ENCODE measurements at regions of chr11 and their contacts with region 1.

Region 1: DNA sequence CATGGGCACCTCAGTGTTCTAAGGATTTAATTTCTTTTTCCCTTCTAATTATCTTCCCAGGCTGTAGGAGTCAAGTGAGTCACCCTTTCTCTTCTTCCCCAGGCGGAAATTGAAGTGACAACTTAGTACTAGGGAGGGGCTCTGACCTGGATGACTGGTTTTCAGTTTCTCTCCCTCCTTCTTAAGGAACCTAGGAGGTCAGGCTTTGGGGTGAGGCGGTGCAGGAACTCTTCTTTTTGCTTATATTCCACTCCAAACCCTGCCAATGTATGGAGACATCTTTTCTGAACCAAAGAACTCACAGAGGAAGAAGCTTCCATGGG is 12.6 kb downstream of the ZDHHC5 start:
- DNase-seq: no peak
- ATAC-seq: no peak
- H3K4me3 ChIP-seq: no peak overlapping the region
- H3K27ac ChIP-seq: no peak overlapping the region
- H3K4me1 ChIP-seq: no peaks in the 10 kb centered on the region
- H3K27me3 ChIP-seq: no peaks in the 10 kb centered on the region
- CTCF ChIP-seq: no peak

Region 2: DNA sequence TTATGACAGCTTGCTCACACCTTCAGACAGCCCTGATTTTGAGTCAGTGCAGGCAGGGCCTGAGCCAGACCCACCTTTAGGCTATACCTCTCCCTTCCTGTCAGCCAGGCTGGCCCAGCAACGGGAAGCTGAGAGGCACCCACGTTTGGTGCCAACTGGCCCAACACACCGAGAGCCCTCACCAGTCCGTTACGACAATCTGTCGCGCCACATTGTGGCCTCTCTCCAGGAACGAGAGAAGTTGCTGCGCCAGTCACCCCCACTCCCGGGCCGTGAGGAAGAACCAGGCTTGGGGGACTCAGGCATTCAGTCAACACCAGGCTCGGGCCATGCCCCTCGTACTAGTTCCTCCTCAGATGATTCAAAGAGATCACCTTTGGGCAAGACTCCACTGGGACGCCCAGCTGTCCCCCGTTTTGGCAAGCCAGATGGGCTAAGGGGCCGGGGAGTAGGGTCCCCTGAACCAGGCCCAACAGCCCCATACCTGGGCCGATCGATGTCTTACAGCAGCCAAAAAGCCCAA is 18.4 kb after region 1 on chr11:
- CTCF ChIA-PET with region 1: no interaction called
- POLR2A ChIA-PET with region 1: no interaction called
- in situ Hi-C with region 1: no loop called
- intact Hi-C with region 1: loop called (anchors 1 kb)
- DNase-seq: no peak
- ATAC-seq: no peak
- H3K4me3 ChIP-seq: no peak overlapping the region
- H3K27ac ChIP-seq: no peak overlapping the region
- H3K4me1 ChIP-seq: no peaks in the 10 kb centered on the region
- H3K27me3 ChIP-seq: no peaks in the 10 kb centered on the region
- CTCF ChIP-seq: no peak

Measured in Panc1 (cell line).